ENCODE measurements at regions of chr6 and their contacts with region 1.

Region 1: GRCh38 chr6:42661540-42662153 is 60.8 kb downstream of the PRPH2 start:
- DNase-seq: peak; percentile 75 to 93 (median 84)
- ATAC-seq: peak; percentile 99
- H3K4me3 ChIP-seq: no peak overlapping the region
- H3K4me3 Mint-ChIP-seq: no peak overlapping the region
- H3K27ac ChIP-seq: no peak overlapping the region
- H3K27ac Mint-ChIP-seq: peak overlapping the region; percentile 2
- H3K4me1 ChIP-seq: no peaks in the 10 kb centered on the region
- H3K4me1 Mint-ChIP-seq: peaks cover 2% of the 10 kb centered on the region
- H3K27me3 ChIP-seq: no peaks in the 10 kb centered on the region
- H3K27me3 Mint-ChIP-seq: no peaks in the 10 kb centered on the region
- CTCF ChIP-seq: peak; percentile 90

Region 2: DNA sequence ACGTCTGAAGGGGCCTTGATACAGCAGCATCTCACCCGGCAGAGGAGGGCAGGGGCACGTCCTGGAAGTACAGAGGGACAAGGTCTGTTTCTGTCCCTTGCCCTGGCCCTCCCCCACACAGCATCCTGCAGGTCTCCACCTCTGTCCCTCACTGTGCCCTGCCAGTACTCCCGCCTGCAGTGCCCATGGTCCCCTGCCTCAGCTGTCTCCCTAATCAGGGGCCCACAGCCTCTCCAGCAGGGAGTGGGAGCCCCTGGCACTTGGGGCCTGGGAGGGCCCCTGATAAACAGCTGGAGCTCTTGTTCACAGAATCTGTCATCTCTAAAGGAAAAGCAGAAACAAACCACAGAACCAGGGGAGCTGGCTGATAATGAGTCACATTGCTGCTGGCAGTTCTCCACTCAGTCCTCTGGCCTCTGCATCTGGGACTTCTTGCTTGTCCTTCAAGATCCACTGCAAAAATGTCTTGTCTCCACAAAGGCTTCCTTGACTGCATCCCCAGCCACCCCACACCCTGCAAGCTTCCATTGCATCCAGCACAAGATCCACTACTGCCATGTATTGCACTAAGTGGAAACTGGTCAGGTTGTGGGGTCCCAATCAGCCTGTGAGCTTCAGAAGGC is 644.5 kb before region 1 on chr6:
- CTCF ChIA-PET with region 1: no interaction called
- POLR2A ChIA-PET with region 1: no interaction called
- intact Hi-C with region 1: no loop called
- DNase-seq: peak in 1 of 9 experiments; percentile 31
- ATAC-seq: peak; percentile 16
- H3K4me3 ChIP-seq: no peak overlapping the region
- H3K4me3 Mint-ChIP-seq: peak overlapping the region; percentile 19
- H3K27ac ChIP-seq: peak overlapping the region in 1 of 2 experiments; percentile 40
- H3K27ac Mint-ChIP-seq: peak overlapping the region; percentile 78
- H3K4me1 ChIP-seq: peaks cover 57% of the 10 kb centered on the region
- H3K4me1 Mint-ChIP-seq: peaks cover 68% of the 10 kb centered on the region
- H3K27me3 ChIP-seq: no peaks in the 10 kb centered on the region
- H3K27me3 Mint-ChIP-seq: no peaks in the 10 kb centered on the region
- CTCF ChIP-seq: no peak

Region 3: DNA sequence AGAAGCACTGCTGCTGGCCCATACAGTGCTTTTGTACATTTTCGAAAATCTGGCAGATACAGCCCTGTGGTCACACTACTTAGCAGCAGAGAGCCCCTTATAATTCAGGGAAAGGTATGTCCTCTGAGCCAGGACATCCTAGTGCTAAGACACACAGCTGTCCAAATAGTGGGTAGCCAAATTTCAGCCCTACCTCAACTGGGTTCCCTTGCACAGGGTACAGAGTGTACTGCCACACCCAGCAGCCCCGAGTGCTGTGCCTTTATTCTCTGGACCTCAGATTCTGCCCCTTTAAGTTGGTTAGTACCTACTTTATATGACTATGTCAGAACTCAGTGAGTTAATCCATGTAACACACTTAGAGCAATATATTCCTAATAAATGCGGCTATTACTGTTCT is 13.1 kb after region 1 on chr6:
- CTCF ChIA-PET with region 1: interaction called, 17 read pairs
- POLR2A ChIA-PET with region 1: interaction called, 3 read pairs
- intact Hi-C with region 1: no loop called
- DNase-seq: no peak
- ATAC-seq: no peak
- H3K4me3 ChIP-seq: no peak overlapping the region
- H3K4me3 Mint-ChIP-seq: no peak overlapping the region
- H3K27ac ChIP-seq: no peak overlapping the region
- H3K27ac Mint-ChIP-seq: no peak overlapping the region
- H3K4me1 ChIP-seq: no peaks in the 10 kb centered on the region
- H3K4me1 Mint-ChIP-seq: no peaks in the 10 kb centered on the region
- H3K27me3 ChIP-seq: no peaks in the 10 kb centered on the region
- H3K27me3 Mint-ChIP-seq: no peaks in the 10 kb centered on the region
- CTCF ChIP-seq: no peak

Region 4: DNA sequence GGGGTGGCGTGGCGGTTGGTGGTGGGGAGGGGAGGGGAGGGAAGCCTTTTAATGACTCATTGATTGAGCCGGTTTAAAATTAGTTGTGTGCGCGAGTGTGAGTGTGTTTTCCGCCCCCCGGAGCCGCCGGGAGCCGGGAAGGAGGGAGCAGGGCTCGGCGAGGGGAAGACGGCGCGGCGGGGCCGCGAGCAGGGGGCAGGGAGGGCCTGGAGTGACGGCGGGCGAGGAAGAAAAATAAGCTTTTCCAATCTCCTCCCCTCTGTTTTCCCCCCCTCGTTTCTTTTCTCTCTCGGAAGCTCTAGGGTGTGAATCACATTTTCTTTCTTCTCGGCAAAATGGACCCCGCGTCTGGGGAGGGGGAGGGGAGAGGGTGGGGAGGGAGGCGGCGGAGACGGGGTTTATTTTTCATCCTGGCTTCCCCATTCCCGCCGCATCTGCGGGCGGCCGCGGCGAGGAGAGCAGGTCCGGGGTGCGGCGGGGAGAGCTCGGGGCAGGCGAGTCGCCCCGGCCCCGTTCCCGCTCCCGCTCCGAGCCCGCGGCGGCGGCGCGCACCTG is 121.1 kb after region 1 on chr6:
- CTCF ChIA-PET with region 1: interaction called, 3 read pairs
- POLR2A ChIA-PET with region 1: interaction called, 11 read pairs
- intact Hi-C with region 1: no loop called
- DNase-seq: peak; percentile 62 to 90 (median 78)
- ATAC-seq: peak; percentile 53
- H3K4me3 ChIP-seq: peak overlapping the region; percentile 74 to 98
- H3K4me3 Mint-ChIP-seq: peak overlapping the region; percentile 96
- H3K27ac ChIP-seq: peak overlapping the region; percentile 100
- H3K27ac Mint-ChIP-seq: peak overlapping the region; percentile 100
- H3K4me1 ChIP-seq: peaks cover 46% of the 10 kb centered on the region
- H3K4me1 Mint-ChIP-seq: peaks cover 26% of the 10 kb centered on the region
- H3K27me3 ChIP-seq: no peaks in the 10 kb centered on the region
- H3K27me3 Mint-ChIP-seq: no peaks in the 10 kb centered on the region
- CTCF ChIP-seq: no peak

Region 5: GRCh38 chr6:42860481-42860880 is 198.8 kb after region 1 on chr6:
- CTCF ChIA-PET with region 1: interaction called, 14 read pairs
- POLR2A ChIA-PET with region 1: no interaction called
- intact Hi-C with region 1: no loop called
- DNase-seq: no peak
- ATAC-seq: no peak
- H3K4me3 ChIP-seq: no peak overlapping the region
- H3K4me3 Mint-ChIP-seq: no peak overlapping the region
- H3K27ac ChIP-seq: no peak overlapping the region
- H3K27ac Mint-ChIP-seq: no peak overlapping the region
- H3K4me1 ChIP-seq: no peaks in the 10 kb centered on the region
- H3K4me1 Mint-ChIP-seq: peaks cover 2% of the 10 kb centered on the region
- H3K27me3 ChIP-seq: no peaks in the 10 kb centered on the region
- H3K27me3 Mint-ChIP-seq: no peaks in the 10 kb centered on the region
- CTCF ChIP-seq: no peak

Region 6: GRCh38 chr6:42901536-42901957 is 239.9 kb after region 1 on chr6:
- CTCF ChIA-PET with region 1: interaction called, 45 read pairs
- POLR2A ChIA-PET with region 1: no interaction called
- intact Hi-C with region 1: loop called (anchors 1 kb)
- DNase-seq: peak; percentile 32 to 89 (median 67)
- ATAC-seq: peak; percentile 100
- H3K4me3 ChIP-seq: no peak overlapping the region
- H3K4me3 Mint-ChIP-seq: peak overlapping the region; percentile 63
- H3K27ac ChIP-seq: no peak overlapping the region
- H3K27ac Mint-ChIP-seq: no peak overlapping the region
- H3K4me1 ChIP-seq: peaks cover 6% of the 10 kb centered on the region
- H3K4me1 Mint-ChIP-seq: peaks cover 17% of the 10 kb centered on the region
- H3K27me3 ChIP-seq: no peaks in the 10 kb centered on the region
- H3K27me3 Mint-ChIP-seq: no peaks in the 10 kb centered on the region
- CTCF ChIP-seq: peak; percentile 92

Measured in CD8-positive, alpha-beta T cell (primary cell).